ENCODE measurements at regions of chr18 and their contacts with region 1.

Region 1: GRCh38 chr18:69636529-69637301 is 236.0 kb downstream of the DOK6 start:
- DNase-seq: no peak
- ATAC-seq: no peak
- H3K4me3 ChIP-seq: no peak overlapping the region
- H3K27ac ChIP-seq: no peak overlapping the region
- H3K4me1 ChIP-seq: no peaks in the 10 kb centered on the region
- H3K27me3 ChIP-seq: no peaks in the 10 kb centered on the region
- CTCF ChIP-seq: peak in 2 of 3 experiments; percentile 23 to 40; a peak in 2 of 6 replicates
- EP300 ChIP-seq: no peak
- POLR2A ChIP-seq: no peak
- RAD21 ChIP-seq: peak; percentile 54 to 65

Region 2: DNA sequence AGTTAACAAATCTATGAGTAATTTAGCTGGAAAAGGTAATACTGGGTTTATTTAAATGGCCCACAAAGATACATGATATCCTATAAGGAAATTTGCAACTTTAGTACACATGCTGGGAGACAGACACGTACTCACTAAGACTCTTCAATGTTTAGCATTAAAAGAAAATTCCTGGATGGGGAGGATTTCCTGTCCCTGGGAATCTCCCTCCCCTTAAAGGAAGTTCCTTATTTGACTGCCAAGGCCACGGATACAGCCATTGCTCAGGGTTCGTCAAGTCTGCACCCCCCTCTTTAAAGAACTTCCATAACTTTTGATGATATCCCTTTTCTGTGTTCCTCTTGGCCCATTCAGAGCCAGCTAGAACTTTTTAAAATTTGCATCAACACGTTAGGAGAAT is 43.4 kb after region 1 on chr18:
- CTCF ChIA-PET with region 1: no interaction called
- POLR2A ChIA-PET with region 1: no interaction called
- in situ Hi-C with region 1: no loop called
- intact Hi-C with region 1: no loop called
- DNase-seq: no peak
- ATAC-seq: no peak
- H3K4me3 ChIP-seq: no peak overlapping the region
- H3K27ac ChIP-seq: no peak overlapping the region
- H3K4me1 ChIP-seq: no peaks in the 10 kb centered on the region
- H3K27me3 ChIP-seq: no peaks in the 10 kb centered on the region
- CTCF ChIP-seq: no peak
- EP300 ChIP-seq: no peak
- POLR2A ChIP-seq: no peak
- RAD21 ChIP-seq: no peak

Region 3: DNA sequence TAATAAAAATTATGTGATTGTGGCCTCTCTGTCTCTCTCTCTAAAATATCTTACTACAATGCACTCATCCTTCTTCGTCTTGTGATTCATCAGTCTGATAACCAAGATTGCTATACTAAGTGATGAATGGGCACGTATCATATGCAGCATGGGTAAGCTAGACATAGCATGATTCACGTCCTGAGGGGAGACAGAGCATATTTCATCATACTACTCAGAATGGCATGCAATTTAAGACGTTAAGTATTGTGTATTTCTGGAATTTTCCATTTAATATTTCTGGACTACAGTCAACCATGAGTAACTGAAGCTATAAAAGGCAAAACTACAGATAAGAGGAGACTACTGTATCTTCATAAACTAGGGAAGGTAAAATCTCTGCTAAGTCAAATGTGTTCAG is 407.9 kb after region 1 on chr18:
- CTCF ChIA-PET with region 1: no interaction called
- POLR2A ChIA-PET with region 1: no interaction called
- in situ Hi-C with region 1: no loop called
- intact Hi-C with region 1: no loop called
- DNase-seq: no peak
- ATAC-seq: no peak
- H3K4me3 ChIP-seq: no peak overlapping the region
- H3K27ac ChIP-seq: no peak overlapping the region
- H3K4me1 ChIP-seq: no peaks in the 10 kb centered on the region; a peak in 1 of 5 replicates
- H3K27me3 ChIP-seq: no peaks in the 10 kb centered on the region
- CTCF ChIP-seq: no peak
- EP300 ChIP-seq: no peak
- POLR2A ChIP-seq: no peak
- RAD21 ChIP-seq: no peak

Region 4: DNA sequence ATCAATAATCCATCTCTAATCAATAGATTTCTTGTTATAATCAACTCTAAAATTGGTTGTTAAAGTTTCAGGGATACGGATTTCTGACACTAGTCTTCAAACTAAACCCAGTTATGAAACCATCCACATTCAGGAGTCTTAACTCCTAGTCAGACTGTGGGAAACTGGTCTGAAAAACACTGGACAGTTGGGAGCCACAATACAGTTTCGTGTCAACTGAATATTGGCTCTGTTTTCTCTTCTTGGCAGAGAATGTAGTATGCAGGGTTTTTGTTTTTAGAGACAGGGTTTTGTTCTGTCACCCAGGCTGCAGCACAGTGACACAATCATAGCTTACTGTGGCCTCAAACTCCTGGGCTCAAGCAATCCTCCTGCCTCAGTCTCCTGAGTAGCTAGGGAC is 445.7 kb after region 1 on chr18:
- CTCF ChIA-PET with region 1: interaction called, 4 read pairs
- POLR2A ChIA-PET with region 1: no interaction called
- in situ Hi-C with region 1: no loop called
- intact Hi-C with region 1: loop called (anchors 10 kb)
- DNase-seq: no peak
- ATAC-seq: no peak
- H3K4me3 ChIP-seq: no peak overlapping the region
- H3K27ac ChIP-seq: no peak overlapping the region
- H3K4me1 ChIP-seq: no peaks in the 10 kb centered on the region
- H3K27me3 ChIP-seq: no peaks in the 10 kb centered on the region
- CTCF ChIP-seq: no peak
- EP300 ChIP-seq: no peak
- POLR2A ChIP-seq: no peak
- RAD21 ChIP-seq: no peak

Measured in K562 (cell line).